HCT116 (cell line): ENCODE measurements at regions of chr16 and their contacts with region 1.

Region 1: DNA sequence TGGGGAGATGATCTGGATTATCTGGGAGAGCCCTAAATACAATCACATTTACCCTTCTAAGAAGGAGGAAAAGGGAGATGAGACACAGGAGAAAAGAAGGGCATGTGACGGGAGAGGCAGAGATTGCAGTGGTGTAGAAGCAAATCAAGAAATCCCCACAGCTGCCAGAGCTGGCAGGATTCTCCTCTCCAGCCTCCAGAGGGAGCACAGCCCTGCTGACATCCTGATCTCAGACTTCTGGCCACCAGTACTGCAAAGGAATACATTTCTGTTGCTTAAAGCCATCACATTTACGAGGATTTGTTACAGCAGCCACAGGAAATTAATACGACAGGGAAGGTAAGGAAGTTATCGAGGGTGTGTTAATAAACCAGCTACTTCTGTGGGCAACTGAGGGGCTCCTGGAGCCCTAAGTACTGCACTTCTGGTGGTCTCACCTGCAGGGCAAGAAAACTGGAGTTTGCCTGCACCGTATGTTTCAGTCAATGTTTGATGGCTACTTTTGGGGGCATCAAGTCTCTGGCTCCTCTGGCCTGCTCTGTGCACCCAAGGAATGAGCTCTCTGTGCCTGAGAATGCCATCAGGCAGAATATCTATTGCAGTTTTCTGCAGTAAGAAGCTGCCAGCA is 22.9 kb upstream of the CDH13 start:
- DNase-seq: peak; percentile 13
- ATAC-seq: peak; percentile 85
- H3K4me3 ChIP-seq: no peak overlapping the region
- H3K27ac ChIP-seq: no peak overlapping the region
- H3K4me1 ChIP-seq: no peaks in the 10 kb centered on the region
- H3K27me3 ChIP-seq: 0 out of 2 replicates have a peak, but pooled peaks cover 4% of the 10 kb centered on the region
- CTCF ChIP-seq: peak; percentile 19 to 54 (median 50); a peak in 5 of 6 replicates
- POLR2A ChIP-seq: no peak
- RAD21 ChIP-seq: peak; percentile 21; the same call in 1 of the 2 replicates

Region 2: DNA sequence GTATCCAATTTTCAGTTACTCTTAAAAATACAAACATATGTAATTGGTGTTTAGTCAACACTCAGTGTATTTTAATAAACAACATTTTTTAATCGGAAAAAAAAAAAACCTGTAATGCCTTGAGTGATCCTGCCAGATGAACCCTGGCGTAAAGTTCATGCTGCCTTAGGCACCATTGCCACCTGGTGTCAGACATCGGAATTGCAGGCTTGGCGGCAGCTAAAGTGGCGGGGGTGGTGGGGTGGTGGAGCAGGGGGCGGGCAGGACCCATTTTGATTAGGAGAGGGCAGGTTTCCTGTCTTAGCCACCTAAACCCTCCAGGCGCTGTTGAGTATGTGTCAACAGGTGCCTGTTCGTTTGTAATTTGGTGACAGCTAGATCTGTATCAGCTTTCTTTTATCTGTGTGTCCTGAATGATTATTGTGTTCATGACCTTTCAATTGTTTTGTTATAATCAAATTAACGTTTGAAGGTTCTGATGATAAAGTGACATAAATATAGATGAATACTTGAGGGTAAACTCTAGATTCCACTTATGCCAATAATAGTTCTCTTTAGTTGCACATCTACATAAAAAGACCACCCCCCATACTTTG is 611.6 kb after region 1 on chr16:
- CTCF ChIA-PET with region 1: no interaction called
- POLR2A ChIA-PET with region 1: no interaction called
- RAD21 ChIA-PET with region 1: no interaction called
- intact Hi-C with region 1: loop called (anchors 10 kb)
- DNase-seq: peak; percentile 21
- ATAC-seq: peak; percentile 77
- H3K4me3 ChIP-seq: no peak overlapping the region
- H3K27ac ChIP-seq: no peak overlapping the region
- H3K4me1 ChIP-seq: no peaks in the 10 kb centered on the region
- H3K27me3 ChIP-seq: no peaks in the 10 kb centered on the region
- CTCF ChIP-seq: peak; percentile 28 to 92 (median 84); a peak in 5 of 6 replicates
- POLR2A ChIP-seq: no peak
- RAD21 ChIP-seq: peak; percentile 65